ENCODE measurements at regions of chr11 and their contacts with region 1.

Region 1: DNA sequence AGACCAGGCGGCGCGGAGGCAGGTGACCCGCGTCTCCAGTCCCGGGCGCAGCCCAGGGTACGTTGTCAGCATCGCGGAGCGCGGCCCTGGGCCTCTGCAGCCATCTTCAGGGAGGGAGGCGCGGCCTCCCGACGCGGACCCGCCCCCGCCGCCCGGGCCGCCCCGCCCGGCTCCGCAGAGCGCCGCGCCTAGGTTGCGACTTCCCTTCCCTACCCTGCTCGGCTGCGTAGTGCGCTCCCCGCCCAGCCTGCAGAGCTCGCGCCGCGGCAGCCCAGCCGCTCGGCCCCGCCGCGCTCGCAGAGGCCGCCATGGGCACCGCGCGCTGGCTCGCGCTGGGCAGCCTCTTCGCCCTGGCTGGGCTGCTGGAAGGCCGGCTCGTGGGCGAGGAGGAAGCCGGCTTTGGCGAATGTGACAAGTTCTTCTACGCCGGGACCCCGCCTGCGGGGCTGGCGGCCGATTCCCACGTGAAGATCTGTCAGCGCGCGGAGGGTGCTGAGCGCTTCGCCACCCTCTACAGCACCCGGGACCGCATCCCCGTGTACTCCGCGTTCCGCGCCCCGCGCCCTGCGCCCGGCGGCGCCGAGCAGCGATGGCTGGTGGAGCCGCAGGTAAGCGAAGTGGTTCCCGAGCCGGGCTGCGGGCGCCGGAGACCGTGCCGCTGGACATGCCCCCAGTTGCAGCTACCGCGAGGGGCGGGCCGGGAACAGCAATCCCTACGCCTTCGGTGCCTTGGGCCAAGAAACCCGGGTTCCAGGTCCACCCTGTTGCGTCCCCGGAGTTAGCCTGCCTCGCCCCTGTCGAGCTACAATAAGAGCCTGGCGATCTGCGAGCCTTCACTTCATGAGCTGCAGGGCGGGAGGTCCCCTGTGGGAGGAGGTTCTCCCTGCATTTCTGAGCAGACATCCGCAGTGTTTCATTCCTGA is at the start of gene ENDOD1:
- DNase-seq: peak; percentile 80 to 88
- ATAC-seq: peak; percentile 95 to 99 (median 98)
- H3K4me3 ChIP-seq: peak within 1 kb of the TSS; percentile 81 to 97 (median 95)
- H3K27ac ChIP-seq: peak within 1 kb of the TSS; percentile 74 to 97 (median 94)
- H3K4me1 ChIP-seq: peaks cover 0 to 45% (median 22%) of the 10 kb centered on the region in 9 donors
- H3K27me3 ChIP-seq: peaks cover 0 to 5% (median 0%) of the 10 kb centered on the region in 7 donors
- CTCF ChIP-seq: peak in 2 of 9 donors; percentile 22 to 25
- total RNA-seq, gene ENDOD1: 7.4 to 15.0 (median 12.3) TPM

Region 2: DNA sequence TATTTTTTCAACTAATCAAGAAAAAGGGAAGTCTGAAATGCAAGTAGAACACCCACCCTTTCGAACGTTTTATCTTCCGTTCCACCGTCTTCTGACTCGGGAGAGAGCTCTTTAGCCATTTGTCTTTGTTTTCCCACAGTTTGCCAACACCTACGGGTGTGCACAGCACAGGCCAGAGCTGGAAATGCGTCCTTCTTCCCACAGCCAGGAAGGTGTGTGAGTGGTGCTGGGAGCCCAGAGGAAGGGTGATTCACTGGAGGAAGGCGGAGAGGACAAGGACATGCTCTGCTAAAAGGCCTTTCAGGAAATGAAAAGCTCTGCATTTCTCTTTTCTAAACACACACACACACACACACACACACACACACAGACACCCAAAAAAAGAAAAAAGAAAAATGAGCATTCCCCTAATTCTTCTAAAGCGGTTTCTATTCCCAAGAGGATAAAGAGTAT is 18.3 kb after region 1 on chr11:
- intact Hi-C with region 1: loop called in 1 of 10 experiments (anchors 2 kb)
- DNase-seq: peak; percentile 23 to 66
- ATAC-seq: peak; percentile 65 to 96 (median 92)
- H3K4me3 ChIP-seq: peak overlapping the region in 3 of 10 donors; percentile 11 to 17 (median 15)
- H3K27ac ChIP-seq: peak overlapping the region; percentile 43 to 86 (median 80)
- H3K4me1 ChIP-seq: peaks cover 0 to 51% (median 28%) of the 10 kb centered on the region in 9 donors
- H3K27me3 ChIP-seq: no peaks in the 10 kb centered on the region
- CTCF ChIP-seq: no peak

Region 3: GRCh38 chr11:95138448-95138847 is 48.6 kb after region 1 on chr11:
- intact Hi-C with region 1: loop called in 3 of 10 experiments (anchors 5 to 10 kb)
- DNase-seq: no peak
- ATAC-seq: peak in 3 of 8 donors; percentile 17 to 61 (median 53)
- H3K4me3 ChIP-seq: no peak overlapping the region
- H3K27ac ChIP-seq: no peak overlapping the region
- H3K4me1 ChIP-seq: peaks cover 0 to 7% (median 4%) of the 10 kb centered on the region in 9 donors
- H3K27me3 ChIP-seq: no peaks in the 10 kb centered on the region
- CTCF ChIP-seq: peak in 6 of 9 donors; percentile 28 to 49 (median 38)

Measured in heart right ventricle (tissue), 16 donors.